Naive thymus-derived CD4-positive, alpha-beta T cell (primary cell): ENCODE measurements at regions of chr15 and their contacts with region 1.

Region 1: GRCh38 chr15:41904541-41905005 is 10.7 kb upstream of the SPTBN5 start:
- DNase-seq: peak; percentile 54 to 76 (median 64)
- ATAC-seq: peak; percentile 89
- H3K4me3 ChIP-seq: no peak overlapping the region
- H3K4me3 Mint-ChIP-seq: no peak overlapping the region
- H3K27ac ChIP-seq: no peak overlapping the region
- H3K27ac Mint-ChIP-seq: peak overlapping the region; percentile 9 to 90 (median 62)
- H3K4me1 ChIP-seq: peaks cover 0 to 9% of the 10 kb centered on the region in 2 donors
- H3K4me1 Mint-ChIP-seq: peaks cover 2 to 14% (median 6%) of the 10 kb centered on the region in 7 donors
- H3K27me3 ChIP-seq: no peaks in the 10 kb centered on the region
- H3K27me3 Mint-ChIP-seq: no peaks in the 10 kb centered on the region

Region 2: GRCh38 chr15:41603941-41604911 is 300.3 kb before region 1 on chr15:
- CTCF ChIA-PET with region 1: no interaction called
- POLR2A ChIA-PET with region 1: no interaction called
- intact Hi-C with region 1: loop called (anchors 1 kb)
- DNase-seq: peak; percentile 19 to 62 (median 50)
- ATAC-seq: peak; percentile 93
- H3K4me3 ChIP-seq: no peak overlapping the region
- H3K4me3 Mint-ChIP-seq: peak overlapping the region in 9 of 10 donors; percentile 17 to 81 (median 73)
- H3K27ac ChIP-seq: no peak overlapping the region
- H3K27ac Mint-ChIP-seq: peak overlapping the region in 1 of 9 donors; percentile 74
- H3K4me1 ChIP-seq: peaks cover 0 to 5% of the 10 kb centered on the region in 2 donors
- H3K4me1 Mint-ChIP-seq: peaks cover 3 to 10% (median 7%) of the 10 kb centered on the region in 7 donors
- H3K27me3 ChIP-seq: no peaks in the 10 kb centered on the region
- H3K27me3 Mint-ChIP-seq: peaks cover 0 to 43% (median 9%) of the 10 kb centered on the region in 5 donors

Region 3: DNA sequence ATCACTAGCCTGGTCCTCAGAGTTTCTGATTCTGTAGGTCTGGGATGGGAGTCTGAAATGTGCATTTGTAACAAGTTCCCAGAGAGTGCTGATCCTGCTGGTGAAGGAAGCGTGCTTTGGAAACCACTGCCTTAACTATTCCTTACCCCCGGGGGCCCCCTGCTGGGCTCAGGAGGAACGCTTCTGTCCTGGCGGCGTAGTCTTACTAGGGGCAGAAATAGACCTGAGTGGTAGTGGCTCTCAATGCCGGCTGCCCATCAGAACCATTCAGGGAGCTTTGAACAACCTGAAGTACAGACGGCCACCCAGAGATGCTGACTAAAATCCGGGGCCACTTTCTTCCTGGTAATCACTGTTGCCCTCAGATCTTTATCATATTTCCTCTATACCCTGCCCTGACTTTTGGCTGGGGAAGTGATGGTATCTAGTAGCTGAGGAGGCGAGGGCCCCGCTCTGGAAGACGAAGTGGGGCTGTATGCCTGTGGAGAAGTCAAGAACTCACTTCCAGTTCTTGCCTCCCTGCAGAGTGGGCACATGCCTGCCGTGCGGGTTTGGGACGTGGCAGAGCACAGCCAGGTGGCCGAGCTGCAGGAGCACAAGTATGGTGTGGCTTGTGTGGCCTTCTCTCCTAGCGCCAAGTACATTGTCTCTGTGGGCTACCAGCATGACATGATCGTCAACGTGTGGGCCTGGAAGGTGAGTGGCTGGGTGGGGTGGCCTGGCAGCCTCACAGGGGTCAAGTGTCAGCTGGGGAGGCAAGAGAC is 93.0 kb before region 1 on chr15:
- CTCF ChIA-PET with region 1: interaction called, 16 read pairs
- POLR2A ChIA-PET with region 1: no interaction called
- intact Hi-C with region 1: loop called in 1 of 2 experiments (anchors 1 kb)
- DNase-seq: peak; percentile 58 to 77 (median 72)
- ATAC-seq: peak; percentile 95
- H3K4me3 ChIP-seq: no peak overlapping the region
- H3K4me3 Mint-ChIP-seq: peak overlapping the region in 1 of 10 donors; percentile 30
- H3K27ac ChIP-seq: no peak overlapping the region
- H3K27ac Mint-ChIP-seq: peak overlapping the region in 1 of 9 donors; percentile 58
- H3K4me1 ChIP-seq: peaks cover 0 to 3% of the 10 kb centered on the region in 2 donors
- H3K4me1 Mint-ChIP-seq: peaks cover 8 to 28% (median 12%) of the 10 kb centered on the region in 7 donors
- H3K27me3 ChIP-seq: no peaks in the 10 kb centered on the region
- H3K27me3 Mint-ChIP-seq: no peaks in the 10 kb centered on the region

Region 4: GRCh38 chr15:41936649-41937567 is 32.3 kb after region 1 on chr15:
- CTCF ChIA-PET with region 1: interaction called, 22 read pairs
- POLR2A ChIA-PET with region 1: interaction called, 8 read pairs
- intact Hi-C with region 1: loop called (anchors 1 to 2 kb)
- DNase-seq: peak; percentile 39 to 85 (median 79)
- ATAC-seq: peak; percentile 86
- H3K4me3 ChIP-seq: peak overlapping the region; percentile 36
- H3K4me3 Mint-ChIP-seq: peak overlapping the region; percentile 63 to 89 (median 82)
- H3K27ac ChIP-seq: peak overlapping the region; percentile 83
- H3K27ac Mint-ChIP-seq: peak overlapping the region; percentile 93 to 100 (median 98)
- H3K4me1 ChIP-seq: peaks cover 50 to 53% of the 10 kb centered on the region in 2 donors
- H3K4me1 Mint-ChIP-seq: peaks cover 41 to 72% (median 65%) of the 10 kb centered on the region in 7 donors
- H3K27me3 ChIP-seq: no peaks in the 10 kb centered on the region
- H3K27me3 Mint-ChIP-seq: no peaks in the 10 kb centered on the region